Left cardiac atrium (tissue), 4 donors: ENCODE measurements at regions of chr4 and their contacts with region 1.

Region 1: GRCh38 chr4:46878641-46879040 is 30.4 kb downstream of the COX7B2 start:
- DNase-seq: no peak
- ATAC-seq: no peak

Region 2: DNA sequence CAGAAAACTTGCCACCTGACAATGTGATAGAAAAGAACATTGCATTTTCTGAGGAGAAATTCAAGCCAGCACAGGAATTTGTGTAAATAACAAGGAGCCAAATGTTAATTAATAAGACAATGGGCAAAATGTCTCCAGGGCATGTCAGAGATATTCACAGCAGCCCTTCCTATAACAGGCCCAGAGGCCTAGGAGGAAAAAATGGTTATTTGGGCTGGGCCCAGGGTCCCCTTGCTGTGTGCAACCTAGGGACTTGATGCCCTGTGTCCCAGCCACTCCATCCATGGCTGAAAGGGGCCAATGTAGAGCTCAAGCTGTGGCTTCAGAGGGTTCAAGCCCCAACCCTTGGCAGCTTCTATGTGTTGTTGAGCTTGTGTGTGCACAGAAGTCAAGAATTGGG is 699.3 kb before region 1 on chr4:
- intact Hi-C with region 1: loop called in 1 of 2 experiments (anchors 10 kb)
- DNase-seq: no peak
- ATAC-seq: no peak